ENCODE measurements at regions of chr10 and their contacts with region 1.

Region 1: DNA sequence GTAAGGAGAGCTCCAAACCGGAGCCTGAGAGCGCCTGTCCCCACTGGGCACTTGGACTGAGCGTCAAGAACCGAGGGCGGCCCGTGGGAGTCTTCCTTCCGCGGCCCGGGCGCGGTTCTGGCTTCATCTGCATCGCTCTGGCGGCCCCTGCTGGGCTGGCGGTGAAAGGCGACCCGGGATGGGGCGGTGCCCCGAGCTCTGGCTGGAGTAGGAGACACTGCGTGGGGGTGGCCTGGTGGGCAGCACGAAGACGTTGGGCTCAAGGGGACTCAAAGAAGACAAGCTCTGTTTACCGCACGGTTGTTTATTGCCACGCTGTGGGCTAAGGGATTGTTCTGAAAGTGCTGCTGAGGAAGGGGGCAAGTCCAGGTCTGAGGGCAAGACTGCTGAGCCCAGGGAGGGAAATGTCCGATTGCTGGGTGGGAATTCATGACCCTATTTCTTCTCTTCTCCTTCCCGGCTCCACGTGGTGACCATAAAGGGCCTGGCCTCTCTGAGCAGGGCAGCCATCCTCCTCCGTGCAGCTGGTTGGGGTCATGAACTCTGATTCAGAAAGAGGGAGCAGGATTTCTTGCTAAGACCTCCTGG is 29.8 kb downstream of the PLAU start:
- DNase-seq: peak; percentile 62 to 99 (median 84)
- ATAC-seq: peak; percentile 99
- H3K4me3 ChIP-seq: peak overlapping the region in 1 of 2 donors; percentile 2
- H3K27ac ChIP-seq: no peak overlapping the region
- H3K4me1 ChIP-seq: peaks cover 11% of the 10 kb centered on the region in 2 donors
- H3K27me3 ChIP-seq: no peaks in the 10 kb centered on the region
- CTCF ChIP-seq: peak; percentile 88 to 95

Region 2: DNA sequence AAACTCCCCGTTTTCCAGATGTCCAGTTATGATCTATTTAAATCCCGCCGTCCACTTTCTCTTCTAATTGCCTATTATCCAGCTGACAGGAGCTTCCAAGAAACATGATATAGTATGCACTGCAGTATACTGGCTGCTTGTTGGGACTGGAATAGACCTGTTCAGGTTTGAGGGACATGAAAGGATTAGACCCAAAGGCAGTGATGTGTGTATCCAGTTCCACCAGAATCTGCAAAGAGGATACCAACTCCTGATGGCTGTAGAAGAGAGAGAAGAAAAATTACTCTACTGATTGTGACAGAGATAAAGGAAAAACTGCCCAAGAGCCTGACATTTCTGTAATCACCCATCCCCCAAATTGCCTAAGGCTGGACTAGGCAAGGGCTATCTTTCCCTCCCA is 516.2 kb before region 1 on chr10:
- intact Hi-C with region 1: no loop called
- DNase-seq: no peak
- ATAC-seq: no peak
- H3K4me3 ChIP-seq: no peak overlapping the region
- H3K27ac ChIP-seq: no peak overlapping the region
- H3K4me1 ChIP-seq: no peaks in the 10 kb centered on the region
- H3K27me3 ChIP-seq: no peaks in the 10 kb centered on the region
- CTCF ChIP-seq: no peak

Region 3: GRCh38 chr10:73886085-73886529 is 54.6 kb before region 1 on chr10:
- intact Hi-C with region 1: loop called in 1 of 2 experiments (anchors 5 kb)
- DNase-seq: peak in 3 of 4 donors; percentile 67 to 85 (median 78)
- ATAC-seq: peak; percentile 86
- H3K4me3 ChIP-seq: no peak overlapping the region
- H3K27ac ChIP-seq: peak overlapping the region; percentile 65 to 78
- H3K4me1 ChIP-seq: peaks cover 29 to 35% of the 10 kb centered on the region in 2 donors
- H3K27me3 ChIP-seq: no peaks in the 10 kb centered on the region
- CTCF ChIP-seq: peak; percentile 76 to 91

Region 4: DNA sequence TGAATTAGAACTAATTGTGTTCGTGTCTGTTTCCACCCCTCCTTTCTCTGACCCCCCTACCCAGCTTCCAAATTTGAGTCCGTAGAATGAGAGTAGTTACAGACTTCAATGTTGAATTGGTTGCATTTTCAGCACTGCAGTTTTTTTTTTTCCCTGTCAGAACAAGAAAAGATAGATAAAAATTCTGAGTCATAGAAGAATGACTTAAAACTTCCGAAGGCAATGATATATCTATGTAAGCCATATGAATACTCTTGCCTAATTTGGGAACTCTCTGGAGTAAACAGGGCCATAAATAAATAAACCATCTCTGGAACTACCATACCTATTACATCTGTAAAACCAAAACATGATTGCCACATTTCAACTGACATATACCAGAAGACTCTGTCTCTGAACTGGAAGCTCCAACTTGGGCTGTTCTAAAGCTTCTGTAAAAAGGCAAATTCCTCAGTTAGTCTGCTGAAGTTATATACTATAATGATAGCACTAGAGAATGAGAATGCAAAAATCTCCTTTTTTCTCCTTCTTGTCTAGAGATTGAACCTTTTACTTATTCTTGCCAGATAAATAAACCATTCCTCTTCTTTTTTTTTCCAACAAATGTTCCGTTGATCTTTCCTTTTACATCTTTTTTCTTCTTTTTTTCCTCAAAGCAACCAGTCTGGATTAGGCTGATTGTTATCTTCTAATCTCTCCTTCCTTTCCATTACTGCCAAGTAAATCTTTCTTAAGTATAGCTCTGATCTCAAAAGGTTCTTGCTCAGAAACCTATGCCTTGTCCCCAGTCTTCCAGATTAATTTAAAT is 80.7 kb after region 1 on chr10:
- intact Hi-C with region 1: no loop called
- DNase-seq: no peak
- ATAC-seq: no peak
- H3K4me3 ChIP-seq: no peak overlapping the region
- H3K27ac ChIP-seq: peak overlapping the region in 1 of 2 donors; percentile 13
- H3K4me1 ChIP-seq: peaks cover 6 to 66% of the 10 kb centered on the region in 2 donors
- H3K27me3 ChIP-seq: no peaks in the 10 kb centered on the region
- CTCF ChIP-seq: no peak